ENCODE measurements at regions of chr2 and their contacts with region 1.

Region 1: DNA sequence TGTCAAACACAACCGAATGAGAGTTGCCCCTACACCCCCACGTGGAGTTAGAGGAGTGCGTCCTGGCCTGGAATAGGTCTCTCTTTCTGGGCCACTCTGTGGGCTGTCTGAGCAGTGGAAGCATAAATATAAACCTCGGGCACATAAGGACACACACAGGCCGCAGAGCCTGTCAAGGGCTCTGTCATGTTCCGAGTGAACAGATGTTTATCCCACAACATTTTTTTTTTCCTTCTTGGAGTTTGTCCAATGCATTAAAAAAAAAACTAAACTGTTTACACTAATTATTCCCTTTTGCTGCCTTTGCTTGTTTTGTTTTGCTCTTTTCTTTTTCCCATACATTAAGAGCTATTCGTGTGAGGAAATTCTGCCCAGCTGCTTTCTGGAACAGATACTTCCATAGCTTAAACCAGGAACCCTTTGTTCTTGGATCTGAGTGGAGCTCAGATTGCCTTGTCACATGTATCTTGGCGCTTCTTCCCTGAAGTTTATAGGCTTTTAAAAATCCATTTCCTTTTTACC is 228.3 kb upstream of the FOSL2 start:
- DNase-seq: no peak

Region 2: GRCh38 chr2:26712486-26713465 is 1451.6 kb before region 1 on chr2:
- intact Hi-C with region 1: loop called in 1 of 2 experiments (anchors 10 kb)
- DNase-seq: no peak